HEK293 (cell line): ENCODE measurements at regions of chr12 and their contacts with region 1.

Region 1: GRCh38 chr12:49967042-49967776 is 5.5 kb downstream of the AQP5 start:
- H3K4me3 ChIP-seq: peak overlapping the region; percentile 31
- H3K27ac ChIP-seq: peak overlapping the region; percentile 32; the same call in 1 of the 2 replicates
- H3K4me1 ChIP-seq: no peaks in the 10 kb centered on the region
- CTCF ChIP-seq: peak; percentile 97

Region 2: GRCh38 chr12:49916129-49916919 is 50.9 kb before region 1 on chr12:
- CTCF ChIA-PET with region 1: interaction called, 15 read pairs
- POLR2A ChIA-PET with region 1: no interaction called
- H3K4me3 ChIP-seq: no peak overlapping the region
- H3K27ac ChIP-seq: no peak overlapping the region
- H3K4me1 ChIP-seq: peaks cover 10% of the 10 kb centered on the region
- CTCF ChIP-seq: no peak

Region 3: GRCh38 chr12:49950273-49951251 is 16.6 kb before region 1 on chr12 and contains the start of gene AQP2:
- CTCF ChIA-PET with region 1: interaction called, 50 read pairs
- POLR2A ChIA-PET with region 1: interaction called, 4 read pairs
- H3K4me3 ChIP-seq: no peak within 1 kb of the TSS
- H3K27ac ChIP-seq: no peak within 1 kb of the TSS
- H3K4me1 ChIP-seq: no peaks in the 10 kb centered on the region
- CTCF ChIP-seq: no peak

Region 4: GRCh38 chr12:50006789-50007436 is 39.7 kb after region 1 on chr12:
- CTCF ChIA-PET with region 1: interaction called, 26 read pairs
- POLR2A ChIA-PET with region 1: no interaction called
- H3K4me3 ChIP-seq: no peak overlapping the region
- H3K27ac ChIP-seq: no peak overlapping the region
- H3K4me1 ChIP-seq: no peaks in the 10 kb centered on the region
- CTCF ChIP-seq: no peak

Region 5: GRCh38 chr12:50043854-50044253 is 76.6 kb after region 1 on chr12:
- CTCF ChIA-PET with region 1: interaction called, 55 read pairs
- POLR2A ChIA-PET with region 1: no interaction called
- H3K4me3 ChIP-seq: no peak overlapping the region
- H3K27ac ChIP-seq: no peak overlapping the region
- H3K4me1 ChIP-seq: no peaks in the 10 kb centered on the region
- CTCF ChIP-seq: no peak

Region 6: GRCh38 chr12:50074936-50075807 is 108.0 kb after region 1 on chr12:
- CTCF ChIA-PET with region 1: interaction called, 88 read pairs
- POLR2A ChIA-PET with region 1: interaction called, 5 read pairs
- H3K4me3 ChIP-seq: no peak overlapping the region
- H3K27ac ChIP-seq: no peak overlapping the region
- H3K4me1 ChIP-seq: no peaks in the 10 kb centered on the region
- CTCF ChIP-seq: peak; percentile 95